CD8-positive, alpha-beta T cell (primary cell): ENCODE measurements at regions of chr19 and their contacts with region 1.

Region 1: DNA sequence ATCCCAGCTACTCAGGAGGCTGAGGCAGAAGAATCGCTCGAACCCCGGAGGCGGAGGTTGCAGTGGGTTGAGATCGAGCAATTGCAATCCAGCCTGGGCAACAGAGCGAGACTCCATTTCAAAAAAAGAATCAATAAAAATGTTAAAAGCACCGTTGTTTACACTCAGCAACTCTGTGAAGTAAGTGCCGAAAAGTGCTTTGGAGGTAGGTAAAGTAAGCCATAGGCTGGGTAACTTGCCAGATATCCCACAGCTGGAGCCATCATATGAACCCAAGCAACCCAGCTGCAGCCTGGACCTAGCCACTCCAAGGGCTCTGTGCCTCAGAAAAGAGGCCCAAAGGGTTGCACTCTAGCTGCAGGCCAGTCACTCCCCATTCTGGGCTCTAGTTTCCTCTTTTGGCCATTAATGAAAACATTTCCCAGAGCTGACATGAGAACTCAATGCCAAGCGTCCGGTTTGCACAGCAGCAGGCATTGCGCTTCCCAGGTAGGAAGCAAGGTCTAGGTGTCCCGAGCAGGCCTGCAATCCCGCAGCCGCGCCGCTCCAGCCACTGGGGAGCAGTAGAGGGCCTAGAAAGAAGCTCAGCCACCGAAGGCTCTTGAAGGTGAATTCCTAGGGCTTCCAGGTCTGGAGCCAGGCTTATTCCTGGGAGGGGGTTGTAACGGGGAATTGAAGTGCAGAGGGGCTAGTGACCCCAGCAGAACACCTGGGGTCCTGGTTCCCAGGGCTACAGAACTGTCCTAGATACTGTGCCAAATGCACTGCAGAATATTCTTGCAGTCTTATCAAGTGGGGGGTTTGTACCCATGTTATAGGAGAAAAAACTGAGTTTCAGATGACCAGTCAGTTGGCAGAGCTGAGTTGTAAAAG is 4.1 kb upstream of the CD79A start:
- DNase-seq: peak; percentile 49 to 83 (median 75)
- ATAC-seq: no peak
- H3K4me3 ChIP-seq: no peak overlapping the region
- H3K4me3 Mint-ChIP-seq: peak overlapping the region; percentile 40
- H3K27ac ChIP-seq: peak overlapping the region; percentile 4 to 76
- H3K27ac Mint-ChIP-seq: peak overlapping the region; percentile 98
- H3K4me1 ChIP-seq: peaks cover 94% of the 10 kb centered on the region
- H3K4me1 Mint-ChIP-seq: peaks cover 79% of the 10 kb centered on the region
- H3K27me3 ChIP-seq: no peaks in the 10 kb centered on the region
- H3K27me3 Mint-ChIP-seq: no peaks in the 10 kb centered on the region
- CTCF ChIP-seq: peak; percentile 79

Region 2: DNA sequence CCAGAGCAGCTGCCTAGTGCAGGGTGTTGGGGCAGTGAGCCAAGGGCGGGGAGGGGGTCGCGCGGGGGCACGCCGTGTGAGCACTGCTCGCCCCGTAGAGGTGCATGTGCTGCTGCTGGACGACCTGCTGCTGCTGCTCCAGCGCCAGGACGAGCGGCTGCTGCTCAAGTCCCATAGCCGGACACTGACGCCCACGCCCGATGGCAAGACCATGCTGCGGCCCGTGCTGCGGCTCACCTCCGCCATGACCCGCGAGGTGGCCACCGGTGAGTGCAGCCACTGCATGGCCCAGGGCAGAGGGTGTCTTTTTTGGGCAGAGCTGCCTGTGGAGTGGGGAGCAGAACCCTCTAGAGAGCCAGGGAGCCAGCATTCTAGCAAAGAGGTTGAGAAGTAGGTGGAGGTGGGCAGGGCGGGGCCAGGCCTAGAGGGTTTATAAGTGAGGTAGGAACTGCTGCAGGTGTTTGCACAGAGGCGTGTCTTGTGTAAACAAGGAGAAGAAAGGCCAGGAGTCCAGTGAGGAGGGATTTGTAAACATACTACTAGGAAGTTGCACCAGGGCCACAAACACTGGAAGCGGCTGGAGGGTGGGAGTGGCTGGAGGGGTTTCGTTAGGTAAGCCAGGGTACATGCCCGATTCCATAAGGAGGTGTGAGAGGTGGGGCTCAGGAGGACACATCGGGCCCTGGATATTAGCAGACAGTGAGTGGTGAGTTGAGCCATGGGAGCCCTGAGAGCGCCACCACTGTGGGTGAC is 31.3 kb after region 1 on chr19:
- CTCF ChIA-PET with region 1: interaction called, 44 read pairs
- POLR2A ChIA-PET with region 1: interaction called, 9 read pairs
- intact Hi-C with region 1: no loop called
- DNase-seq: no peak
- ATAC-seq: no peak
- H3K4me3 ChIP-seq: no peak overlapping the region
- H3K4me3 Mint-ChIP-seq: no peak overlapping the region
- H3K27ac ChIP-seq: no peak overlapping the region
- H3K27ac Mint-ChIP-seq: peak overlapping the region; percentile 29
- H3K4me1 ChIP-seq: peaks cover 61% of the 10 kb centered on the region
- H3K4me1 Mint-ChIP-seq: peaks cover 44% of the 10 kb centered on the region
- H3K27me3 ChIP-seq: no peaks in the 10 kb centered on the region
- H3K27me3 Mint-ChIP-seq: no peaks in the 10 kb centered on the region
- CTCF ChIP-seq: no peak

Region 3: DNA sequence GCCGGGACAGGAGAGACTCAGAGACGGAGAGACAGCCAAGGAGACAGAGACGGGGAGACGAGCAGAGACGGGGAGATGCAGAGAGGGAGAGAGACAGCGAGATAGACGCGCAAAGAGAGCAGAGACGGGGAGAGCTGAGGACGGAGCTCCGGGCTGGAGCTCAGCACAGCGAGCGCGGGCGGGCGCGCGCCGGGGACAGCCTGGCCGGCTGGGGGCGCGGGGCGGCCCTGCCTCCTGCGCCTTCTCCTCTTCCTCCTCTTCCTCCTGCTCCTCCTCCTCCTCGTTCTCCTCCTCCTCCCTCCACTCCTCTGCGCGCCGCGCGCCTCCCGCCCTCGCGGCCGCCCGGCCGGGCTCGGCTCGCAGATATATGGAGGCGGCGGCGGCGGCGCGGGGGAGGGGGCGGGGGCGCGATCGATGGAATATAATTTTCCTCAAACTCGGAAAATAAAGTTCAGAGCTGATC is 55.2 kb after region 1 on chr19 and contains the start of gene ERFL:
- CTCF ChIA-PET with region 1: interaction called, 23 read pairs
- POLR2A ChIA-PET with region 1: interaction called, 6 read pairs
- intact Hi-C with region 1: no loop called
- DNase-seq: peak in 3 of 9 experiments; percentile 23 to 55 (median 40)
- ATAC-seq: peak; percentile 37
- H3K4me3 ChIP-seq: peak within 1 kb of the TSS; percentile 54 to 58
- H3K4me3 Mint-ChIP-seq: no peak within 1 kb of the TSS
- H3K27ac ChIP-seq: peak within 1 kb of the TSS in 1 of 2 experiments; percentile 56
- H3K27ac Mint-ChIP-seq: peak within 1 kb of the TSS; percentile 96
- H3K4me1 ChIP-seq: peaks cover 24% of the 10 kb centered on the region
- H3K4me1 Mint-ChIP-seq: peaks cover 34% of the 10 kb centered on the region
- H3K27me3 ChIP-seq: peaks cover 0 to 13% of the 10 kb centered on the region in 2 experiments
- H3K27me3 Mint-ChIP-seq: no peaks in the 10 kb centered on the region
- CTCF ChIP-seq: no peak
- total RNA-seq, gene ERFL: 5.4 to 6.8 TPM

Region 4: DNA sequence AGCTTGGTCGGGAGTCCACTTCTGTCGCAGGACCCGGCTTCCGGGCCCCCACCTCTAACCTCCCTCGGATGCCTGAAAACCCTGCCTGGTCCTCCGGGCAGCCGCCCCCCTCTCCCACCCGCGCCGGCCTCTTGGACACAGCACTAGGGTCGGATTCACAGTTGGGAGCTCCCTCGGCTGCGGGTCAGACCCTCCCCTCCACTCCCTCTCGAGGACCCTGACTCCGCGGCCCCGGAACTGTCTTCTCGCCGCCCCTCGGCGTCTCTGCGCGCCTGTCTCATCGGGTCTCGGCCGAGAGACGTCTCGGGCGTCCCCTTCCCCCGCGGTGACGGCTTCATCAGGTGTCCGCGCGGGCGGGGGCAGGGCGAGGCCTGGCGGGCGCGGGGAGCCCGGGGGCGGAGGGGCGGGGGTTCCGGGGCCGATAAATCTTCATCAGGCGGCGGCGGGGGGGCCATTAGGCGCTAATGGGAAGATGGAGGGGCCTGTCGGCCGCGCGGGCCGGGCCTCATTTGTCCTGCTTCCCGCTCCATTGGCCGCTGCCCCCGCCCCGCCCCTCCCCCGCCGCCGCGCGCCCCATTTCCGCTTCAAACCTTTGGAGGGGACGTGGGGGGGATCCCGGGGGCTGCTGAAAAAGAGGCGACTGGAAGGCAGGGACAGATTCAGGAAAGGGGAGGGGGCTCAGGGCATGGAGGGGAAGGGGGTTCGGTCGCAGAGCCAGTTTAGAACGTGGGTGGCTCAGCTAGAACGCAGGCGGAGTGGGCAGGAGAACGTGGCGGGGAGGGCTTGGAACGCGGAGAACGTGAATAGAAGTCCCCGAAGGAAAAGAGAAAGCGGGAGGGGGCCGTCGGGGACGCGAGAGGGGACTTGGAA is 67.1 kb after region 1 on chr19:
- CTCF ChIA-PET with region 1: interaction called, 23 read pairs
- POLR2A ChIA-PET with region 1: interaction called, 16 read pairs
- intact Hi-C with region 1: loop called in 1 of 2 experiments (anchors 1 kb)
- DNase-seq: peak in 5 of 9 experiments; percentile 38 to 72 (median 62)
- ATAC-seq: peak; percentile 9
- H3K4me3 ChIP-seq: peak overlapping the region; percentile 36 to 62
- H3K4me3 Mint-ChIP-seq: peak overlapping the region; percentile 86
- H3K27ac ChIP-seq: peak overlapping the region in 1 of 2 experiments; percentile 35
- H3K27ac Mint-ChIP-seq: peak overlapping the region; percentile 96
- H3K4me1 ChIP-seq: peaks cover 39% of the 10 kb centered on the region
- H3K4me1 Mint-ChIP-seq: peaks cover 45% of the 10 kb centered on the region
- H3K27me3 ChIP-seq: peaks cover 0 to 6% of the 10 kb centered on the region in 2 experiments
- H3K27me3 Mint-ChIP-seq: no peaks in the 10 kb centered on the region
- CTCF ChIP-seq: no peak

Region 5: DNA sequence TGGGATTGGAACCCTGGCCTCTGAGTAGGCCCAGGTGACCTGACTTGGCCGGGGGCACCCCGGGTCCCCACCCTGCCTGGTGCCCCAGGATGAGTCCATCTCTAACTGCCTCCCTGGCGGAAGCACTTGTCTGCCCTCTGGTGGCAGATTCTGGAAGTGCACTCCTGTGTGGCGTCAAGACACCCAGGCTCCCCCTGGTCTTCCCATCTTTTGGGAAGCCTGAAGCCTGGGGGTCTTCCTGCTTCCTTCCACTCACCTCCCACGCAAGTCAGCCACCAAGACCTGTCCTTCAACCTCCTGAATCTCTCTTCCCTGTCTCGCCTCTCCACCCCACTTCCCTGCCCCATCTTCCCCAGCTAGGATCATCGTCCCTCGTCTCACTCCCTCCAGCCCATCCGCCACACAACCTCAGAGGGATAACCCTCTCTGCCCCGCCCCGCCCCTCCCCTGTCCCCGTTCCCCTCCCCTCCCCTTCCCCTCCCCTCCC is 78.7 kb after region 1 on chr19:
- CTCF ChIA-PET with region 1: interaction called, 66 read pairs
- POLR2A ChIA-PET with region 1: interaction called, 16 read pairs
- intact Hi-C with region 1: loop called (anchors 1 kb)
- DNase-seq: peak; percentile 73 to 97 (median 89)
- ATAC-seq: peak; percentile 88
- H3K4me3 ChIP-seq: no peak overlapping the region
- H3K4me3 Mint-ChIP-seq: no peak overlapping the region
- H3K27ac ChIP-seq: no peak overlapping the region
- H3K27ac Mint-ChIP-seq: peak overlapping the region; percentile 85
- H3K4me1 ChIP-seq: peaks cover 15% of the 10 kb centered on the region
- H3K4me1 Mint-ChIP-seq: peaks cover 31% of the 10 kb centered on the region
- H3K27me3 ChIP-seq: no peaks in the 10 kb centered on the region
- H3K27me3 Mint-ChIP-seq: no peaks in the 10 kb centered on the region
- CTCF ChIP-seq: peak; percentile 96

Region 6: DNA sequence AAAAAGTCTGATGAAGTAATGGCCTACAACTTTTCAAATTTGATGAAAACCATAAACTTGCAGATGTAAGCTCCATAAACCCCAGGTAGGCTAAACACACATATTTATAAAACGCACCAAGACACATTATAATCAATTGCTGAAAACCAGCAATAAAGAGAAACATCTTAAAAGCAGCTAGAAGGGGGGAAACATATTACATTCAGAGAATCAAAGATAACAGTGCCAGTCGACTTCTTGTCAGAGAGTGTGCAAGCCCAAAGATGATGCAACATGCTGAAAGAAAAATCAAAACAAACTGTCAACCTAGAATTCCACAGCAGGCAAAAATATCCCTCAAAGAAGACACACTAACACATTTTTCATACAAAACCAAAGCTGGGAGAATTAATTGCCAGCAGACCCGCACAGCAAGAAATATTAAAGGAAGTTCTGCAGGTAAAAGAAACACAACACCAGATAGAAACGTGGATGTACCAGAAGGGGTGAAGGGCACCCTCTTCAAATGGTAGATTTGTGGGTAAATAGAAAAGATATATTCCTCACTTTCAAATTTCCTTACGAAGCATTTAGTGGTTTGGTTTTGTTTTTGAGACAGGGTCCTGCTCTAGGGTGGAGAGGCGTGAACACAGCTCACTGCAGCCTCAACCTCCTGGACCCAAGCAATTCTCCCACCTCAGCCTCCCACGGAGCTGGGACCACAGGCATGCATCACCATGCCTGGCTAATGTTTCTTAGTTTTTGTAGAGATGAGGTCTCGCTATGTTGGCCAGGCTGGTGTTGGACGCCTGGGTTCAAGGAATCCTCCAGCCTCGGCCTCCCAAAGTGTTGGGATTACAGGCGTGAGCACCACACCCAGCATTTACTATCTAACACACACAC is 137.5 kb after region 1 on chr19:
- CTCF ChIA-PET with region 1: no interaction called
- POLR2A ChIA-PET with region 1: no interaction called
- intact Hi-C with region 1: no loop called
- DNase-seq: no peak
- ATAC-seq: no peak
- H3K4me3 ChIP-seq: no peak overlapping the region
- H3K4me3 Mint-ChIP-seq: no peak overlapping the region
- H3K27ac ChIP-seq: no peak overlapping the region
- H3K27ac Mint-ChIP-seq: no peak overlapping the region
- H3K4me1 ChIP-seq: no peaks in the 10 kb centered on the region
- H3K4me1 Mint-ChIP-seq: no peaks in the 10 kb centered on the region
- H3K27me3 ChIP-seq: no peaks in the 10 kb centered on the region
- H3K27me3 Mint-ChIP-seq: peaks cover 4% of the 10 kb centered on the region
- CTCF ChIP-seq: no peak